PC-3 (cell line): ENCODE measurements at regions of chr3 and their contacts with region 1.

Region 1: DNA sequence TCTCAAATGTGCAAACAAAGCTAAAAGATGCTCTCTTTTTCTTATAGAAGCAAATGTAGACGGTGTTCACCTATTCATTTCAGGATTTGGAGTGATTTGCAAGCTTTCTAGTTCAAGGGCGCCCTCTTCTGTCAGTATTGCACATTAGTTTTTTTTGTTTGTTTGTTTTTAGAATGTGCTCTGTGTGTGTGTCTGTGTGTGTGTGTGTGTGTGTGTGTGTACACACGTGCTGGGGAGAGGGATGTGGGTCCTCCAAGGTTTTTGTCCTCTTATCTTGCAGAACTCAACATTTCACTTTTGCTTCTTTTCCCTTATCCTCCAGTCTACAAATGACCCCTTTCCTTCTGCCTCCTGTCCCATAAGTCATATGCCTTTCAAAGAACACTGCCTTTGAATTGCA is 23.5 kb downstream of the DNAH1 start:
- DNase-seq: peak; percentile 80
- ATAC-seq: peak; percentile 56
- H3K4me3 ChIP-seq: no peak overlapping the region
- H3K27ac ChIP-seq: no peak overlapping the region
- H3K4me1 ChIP-seq: peaks cover 2% of the 10 kb centered on the region
- H3K27me3 ChIP-seq: no peaks in the 10 kb centered on the region
- CTCF ChIP-seq: peak; percentile 90

Region 2: GRCh38 chr3:52220380-52221026 is 119.1 kb before region 1 on chr3:
- CTCF ChIA-PET with region 1: interaction called, 11 read pairs
- POLR2A ChIA-PET with region 1: interaction called, 14 read pairs
- intact Hi-C with region 1: loop called (anchors 5 kb)
- DNase-seq: peak; percentile 93
- ATAC-seq: peak; percentile 45
- H3K4me3 ChIP-seq: no peak overlapping the region
- H3K27ac ChIP-seq: 0 out of 2 replicates have a peak overlapping the region, but pooled peaks have one; percentile 13
- H3K4me1 ChIP-seq: peaks cover 49% of the 10 kb centered on the region
- H3K27me3 ChIP-seq: no peaks in the 10 kb centered on the region
- CTCF ChIP-seq: peak; percentile 94

Region 3: GRCh38 chr3:52238761-52239701 is 100.6 kb before region 1 on chr3 and contains the start of gene TWF2:
- CTCF ChIA-PET with region 1: interaction called, 5 read pairs
- POLR2A ChIA-PET with region 1: no interaction called
- intact Hi-C with region 1: loop called (anchors 5 kb)
- DNase-seq: peak; percentile 86
- ATAC-seq: peak; percentile 64
- H3K4me3 ChIP-seq: peak within 1 kb of the TSS; percentile 97
- H3K27ac ChIP-seq: peak within 1 kb of the TSS; percentile 93
- H3K4me1 ChIP-seq: peaks cover 39% of the 10 kb centered on the region
- H3K27me3 ChIP-seq: no peaks in the 10 kb centered on the region
- CTCF ChIP-seq: peak; percentile 37; the same call in 1 of the 2 replicates
- total RNA-seq, gene TWF2: 147 and 166 TPM in 2 replicates

Region 4: DNA sequence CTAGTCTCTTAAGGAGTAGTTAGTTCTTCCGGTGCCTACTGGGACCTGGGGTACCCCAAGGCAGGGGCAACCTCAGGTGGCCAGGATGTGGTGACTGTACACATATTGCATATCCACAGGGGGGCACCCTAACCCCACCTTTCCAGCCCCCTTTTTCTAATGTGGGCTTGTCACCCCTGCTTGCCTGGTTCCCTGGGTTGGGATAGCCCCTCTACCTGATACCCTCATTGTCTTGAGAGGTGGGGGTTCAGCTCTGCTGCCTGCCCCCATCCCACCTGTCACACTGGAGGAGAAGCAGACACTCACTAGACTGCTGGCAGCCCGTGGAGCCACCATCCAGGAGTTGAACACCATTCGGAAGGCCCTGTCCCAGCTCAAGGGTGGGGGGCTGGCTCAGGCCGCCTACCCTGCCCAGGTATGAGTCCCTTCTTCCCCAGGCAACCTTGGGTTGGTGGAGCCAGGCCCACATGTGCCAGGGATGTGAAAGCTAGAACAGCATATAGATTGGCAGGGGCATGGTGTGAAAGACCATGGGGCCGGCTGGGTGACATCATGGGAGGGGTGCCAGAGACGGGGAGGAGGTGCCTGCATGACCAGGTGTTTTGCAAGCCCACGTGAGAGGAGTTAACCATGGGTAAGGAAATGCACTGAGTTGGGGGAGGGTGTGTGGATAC is 48.0 kb before region 1 on chr3:
- CTCF ChIA-PET with region 1: interaction called, 3 read pairs
- POLR2A ChIA-PET with region 1: no interaction called
- intact Hi-C with region 1: loop called (anchors 1 kb)
- DNase-seq: peak; percentile 45
- ATAC-seq: 0 out of 2 replicates have a peak, but pooled peaks have one; percentile 9
- H3K4me3 ChIP-seq: no peak overlapping the region
- H3K27ac ChIP-seq: no peak overlapping the region
- H3K4me1 ChIP-seq: peaks cover 13% of the 10 kb centered on the region
- H3K27me3 ChIP-seq: no peaks in the 10 kb centered on the region
- CTCF ChIP-seq: peak; percentile 87

Region 5: DNA sequence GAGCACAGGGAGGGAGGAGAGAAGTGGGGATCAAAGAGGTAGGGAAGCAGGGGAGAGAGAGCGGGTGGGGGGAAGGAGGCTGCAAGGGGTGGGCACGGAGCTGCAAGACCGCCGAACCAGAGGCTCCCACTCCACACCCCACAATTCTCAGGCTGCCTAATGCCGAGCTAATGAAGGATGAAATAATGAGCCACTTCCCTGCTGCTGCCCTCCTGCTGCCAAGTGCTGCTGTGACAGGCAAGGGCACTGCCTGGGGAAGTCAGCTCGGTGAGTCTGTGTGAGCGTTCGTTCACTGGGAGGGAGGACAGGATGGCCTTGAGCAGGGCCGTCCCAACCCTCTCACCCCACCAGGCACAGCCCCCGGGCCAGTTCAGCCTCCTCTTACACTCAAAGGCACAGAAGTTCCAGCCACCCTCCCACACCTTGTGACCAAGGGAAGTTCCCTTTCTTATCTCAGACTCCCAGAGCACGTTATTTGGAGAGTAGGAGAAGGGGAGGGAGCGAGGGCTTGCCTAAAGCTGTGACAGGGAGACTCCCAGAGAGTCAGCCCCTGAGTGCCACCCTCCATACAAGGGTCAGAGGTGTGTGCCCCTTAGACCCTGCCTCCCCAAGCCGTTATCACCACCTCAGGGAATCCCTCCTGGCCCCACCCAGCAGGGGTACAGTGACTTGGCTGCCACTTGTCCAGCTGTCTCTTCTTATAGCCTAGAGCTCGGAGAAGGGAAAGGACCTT is 39.6 kb before region 1 on chr3:
- CTCF ChIA-PET with region 1: no interaction called
- POLR2A ChIA-PET with region 1: interaction called, 16 read pairs
- intact Hi-C with region 1: no loop called
- DNase-seq: peak; percentile 23
- ATAC-seq: peak; percentile 78
- H3K4me3 ChIP-seq: no peak overlapping the region
- H3K27ac ChIP-seq: no peak overlapping the region
- H3K4me1 ChIP-seq: peaks cover 4% of the 10 kb centered on the region; the same call in 1 of the 2 replicates
- H3K27me3 ChIP-seq: no peaks in the 10 kb centered on the region
- CTCF ChIP-seq: 0 out of 2 replicates have a peak, but pooled peaks have one; percentile 9

Region 6: DNA sequence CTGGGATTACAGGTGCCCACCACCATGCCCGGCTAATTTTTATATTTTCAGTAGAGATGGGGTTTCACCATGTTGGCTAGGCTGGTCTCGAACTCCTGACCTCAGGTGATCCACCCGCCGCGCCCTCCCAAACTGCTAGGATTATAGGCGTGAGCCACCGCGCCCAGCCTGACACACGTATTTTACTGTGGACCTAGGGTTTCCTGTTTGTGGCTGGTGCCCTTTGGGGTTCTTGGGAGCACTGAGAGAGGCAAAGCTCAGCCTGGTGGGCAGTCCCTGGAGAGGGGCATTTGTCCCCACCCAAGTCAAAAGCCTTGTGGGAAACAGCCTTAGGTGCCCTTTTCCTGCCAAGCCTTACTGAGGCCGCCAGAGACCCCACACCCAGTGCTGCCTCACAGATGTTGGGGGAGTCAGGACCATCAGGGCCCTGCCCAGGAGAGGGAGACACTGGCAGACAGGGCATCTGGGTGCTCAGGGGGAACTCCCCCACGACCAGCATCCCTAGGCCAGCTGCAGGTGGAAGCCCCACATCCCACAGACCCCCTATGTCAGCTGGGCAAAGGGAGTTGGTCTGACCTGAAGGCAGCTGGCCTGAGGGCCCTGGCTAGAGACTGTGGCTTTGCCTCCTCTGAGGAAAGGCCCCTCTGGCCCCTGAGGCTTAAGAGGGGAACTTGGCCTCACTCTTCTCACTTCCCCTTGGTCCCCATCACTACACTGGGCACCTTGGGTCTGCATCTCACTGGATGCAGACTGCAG is 11.5 kb after region 1 on chr3:
- CTCF ChIA-PET with region 1: no interaction called
- POLR2A ChIA-PET with region 1: interaction called, 14 read pairs
- intact Hi-C with region 1: no loop called
- DNase-seq: no peak
- ATAC-seq: no peak
- H3K4me3 ChIP-seq: no peak overlapping the region
- H3K27ac ChIP-seq: no peak overlapping the region
- H3K4me1 ChIP-seq: no peaks in the 10 kb centered on the region
- H3K27me3 ChIP-seq: no peaks in the 10 kb centered on the region
- CTCF ChIP-seq: no peak

Region 7: DNA sequence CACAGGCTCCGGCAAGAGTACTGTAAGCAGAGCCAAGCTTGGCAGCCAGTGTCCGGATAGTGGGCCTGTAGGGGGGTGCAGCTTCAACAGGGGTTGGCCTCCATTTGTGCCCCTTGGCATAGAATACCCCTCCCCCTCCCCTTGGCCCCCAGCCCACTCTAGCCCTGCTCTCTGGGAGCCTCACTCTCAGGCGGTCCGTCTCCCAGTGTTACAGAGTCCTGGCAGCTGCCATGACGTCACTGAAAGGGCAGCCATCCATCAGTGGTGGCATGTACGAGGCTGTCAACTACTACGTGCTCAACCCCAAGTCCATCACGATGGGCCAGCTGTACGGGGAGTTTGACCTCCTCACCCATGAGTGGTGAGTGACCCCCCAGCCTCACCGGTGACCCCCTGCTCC is 26.9 kb after region 1 on chr3:
- CTCF ChIA-PET with region 1: no interaction called
- POLR2A ChIA-PET with region 1: no interaction called
- intact Hi-C with region 1: no loop called
- DNase-seq: no peak
- ATAC-seq: no peak
- H3K4me3 ChIP-seq: no peak overlapping the region
- H3K27ac ChIP-seq: no peak overlapping the region
- H3K4me1 ChIP-seq: no peaks in the 10 kb centered on the region
- H3K27me3 ChIP-seq: no peaks in the 10 kb centered on the region
- CTCF ChIP-seq: no peak